Heart right ventricle (tissue), 16 donors: ENCODE measurements at regions of chr1 and their contacts with region 1.

Region 1: DNA sequence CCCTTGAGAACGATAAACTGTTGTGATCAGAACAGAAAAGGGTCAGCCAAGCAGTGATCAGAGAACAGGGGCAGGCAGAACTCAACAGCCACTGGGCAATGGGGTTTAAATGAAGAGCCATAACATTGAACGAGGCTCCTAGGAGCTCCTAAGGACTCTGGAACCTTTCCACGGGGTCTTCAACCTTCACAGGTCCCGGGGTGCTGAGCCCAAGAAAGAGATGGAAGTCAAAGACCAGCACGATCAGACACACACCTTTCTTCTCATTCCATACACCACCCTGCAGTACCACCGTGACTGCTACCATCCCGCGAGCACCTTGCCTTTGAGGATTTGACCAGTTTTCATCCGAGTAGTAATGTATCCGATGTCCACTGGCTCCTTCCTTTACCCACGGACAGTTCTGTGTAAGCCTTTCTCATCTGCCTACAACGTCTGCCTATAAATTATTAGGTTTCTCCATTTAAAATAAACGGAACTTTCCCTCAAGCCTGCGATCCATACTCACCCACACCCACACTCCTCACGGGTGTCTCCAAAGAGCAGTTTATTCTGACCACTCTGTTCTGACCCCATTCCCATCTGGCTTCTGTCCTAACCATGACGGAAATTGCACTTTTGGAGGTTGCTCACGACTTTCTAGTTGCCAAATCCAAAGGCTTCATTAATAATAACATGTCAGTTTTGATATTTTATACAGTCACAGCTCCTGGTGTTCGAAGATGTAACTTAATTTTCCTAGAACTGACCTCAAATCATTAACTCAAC is 16.8 kb upstream of the HHAT start:
- DNase-seq: peak in 1 of 2 donors; percentile 51
- ATAC-seq: peak; percentile 62 to 81 (median 72)
- H3K4me3 ChIP-seq: peak overlapping the region in 8 of 10 donors; percentile 13 to 49 (median 44)
- H3K27ac ChIP-seq: peak overlapping the region; percentile 19 to 88 (median 77)
- H3K4me1 ChIP-seq: peaks cover 0 to 24% (median 12%) of the 10 kb centered on the region in 9 donors
- H3K27me3 ChIP-seq: peaks cover 0 to 8% (median 0%) of the 10 kb centered on the region in 7 donors
- CTCF ChIP-seq: no peak

Region 2: DNA sequence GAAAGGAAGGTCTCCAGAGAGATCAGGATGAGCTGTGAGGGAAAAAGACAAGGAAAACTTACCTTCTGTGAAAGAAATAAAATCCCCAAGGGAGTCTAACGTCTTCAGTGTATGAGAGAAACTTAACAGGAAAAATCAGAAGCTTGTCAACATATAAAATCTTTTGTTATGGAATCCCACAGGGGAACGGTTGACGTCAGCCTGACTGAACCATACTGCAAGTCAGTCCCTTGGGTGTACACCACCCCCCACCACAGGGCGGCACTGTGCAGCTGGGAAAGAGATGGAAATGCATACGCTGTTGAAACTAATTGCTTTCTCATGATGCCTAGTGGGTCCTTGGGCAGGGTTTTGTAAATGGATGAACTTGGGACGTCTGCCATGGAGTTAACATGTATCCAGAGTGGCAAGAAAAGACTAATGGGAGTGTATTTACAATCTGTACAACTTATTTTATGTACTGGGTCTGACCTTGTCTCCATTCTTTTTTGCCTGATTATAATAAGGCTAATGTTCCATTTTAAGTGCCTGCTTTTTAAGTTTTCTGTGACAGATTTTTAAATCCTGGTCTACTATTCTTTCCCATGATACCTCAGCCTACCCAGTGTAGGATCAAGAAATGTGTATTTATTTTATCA is 461.4 kb before region 1 on chr1:
- intact Hi-C with region 1: loop called in 2 of 10 experiments (anchors 10 kb)
- DNase-seq: peak; percentile 28 to 34
- ATAC-seq: peak in 4 of 8 donors; percentile 20 to 46 (median 40)
- H3K4me3 ChIP-seq: no peak overlapping the region
- H3K27ac ChIP-seq: no peak overlapping the region
- H3K4me1 ChIP-seq: peaks cover 0 to 5% (median 0%) of the 10 kb centered on the region in 9 donors
- H3K27me3 ChIP-seq: no peaks in the 10 kb centered on the region
- CTCF ChIP-seq: peak in 7 of 9 donors; percentile 30 to 55 (median 35)

Region 3: GRCh38 chr1:209860293-209860881 is 451.5 kb before region 1 on chr1:
- intact Hi-C with region 1: loop called in 8 of 10 experiments (anchors 5 to 10 kb)
- DNase-seq: peak; percentile 58 to 60
- ATAC-seq: peak in 6 of 8 donors; percentile 59 to 81 (median 78)
- H3K4me3 ChIP-seq: no peak overlapping the region
- H3K27ac ChIP-seq: no peak overlapping the region
- H3K4me1 ChIP-seq: no peaks in the 10 kb centered on the region
- H3K27me3 ChIP-seq: peaks cover 0 to 33% (median 22%) of the 10 kb centered on the region in 7 donors
- CTCF ChIP-seq: peak; percentile 66 to 96 (median 87)

Region 4: DNA sequence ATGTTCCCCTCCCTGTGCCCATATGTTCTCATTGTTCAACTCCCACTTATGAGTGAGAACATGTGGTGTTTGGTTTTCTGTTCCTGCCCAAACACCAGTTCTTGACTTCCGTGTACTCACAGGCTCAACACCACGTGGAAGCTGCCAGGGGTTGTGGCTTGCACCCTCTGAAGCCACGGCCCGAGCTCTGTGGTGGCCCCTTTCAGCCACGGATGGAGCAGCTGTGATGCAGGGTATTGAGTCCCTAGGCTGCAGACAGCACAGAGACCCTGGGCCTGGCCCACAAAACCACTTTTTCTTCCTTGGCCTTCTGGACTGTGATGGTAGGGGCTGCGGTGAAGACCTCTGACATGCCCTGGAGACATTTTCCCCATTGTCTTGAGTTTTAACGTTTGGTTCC is 262.3 kb before region 1 on chr1:
- intact Hi-C with region 1: no loop called
- DNase-seq: no peak
- ATAC-seq: no peak
- H3K4me3 ChIP-seq: no peak overlapping the region
- H3K27ac ChIP-seq: no peak overlapping the region
- H3K4me1 ChIP-seq: no peaks in the 10 kb centered on the region
- H3K27me3 ChIP-seq: no peaks in the 10 kb centered on the region
- CTCF ChIP-seq: no peak

Region 5: GRCh38 chr1:210143465-210144062 is 168.3 kb before region 1 on chr1:
- intact Hi-C with region 1: loop called (anchors 1 to 5 kb)
- DNase-seq: peak; percentile 70 to 77
- ATAC-seq: peak in 2 of 8 donors; percentile 38
- H3K4me3 ChIP-seq: no peak overlapping the region
- H3K27ac ChIP-seq: no peak overlapping the region
- H3K4me1 ChIP-seq: no peaks in the 10 kb centered on the region
- H3K27me3 ChIP-seq: peaks cover 0 to 16% (median 0%) of the 10 kb centered on the region in 7 donors
- CTCF ChIP-seq: peak; percentile 45 to 82 (median 72)

Region 6: DNA sequence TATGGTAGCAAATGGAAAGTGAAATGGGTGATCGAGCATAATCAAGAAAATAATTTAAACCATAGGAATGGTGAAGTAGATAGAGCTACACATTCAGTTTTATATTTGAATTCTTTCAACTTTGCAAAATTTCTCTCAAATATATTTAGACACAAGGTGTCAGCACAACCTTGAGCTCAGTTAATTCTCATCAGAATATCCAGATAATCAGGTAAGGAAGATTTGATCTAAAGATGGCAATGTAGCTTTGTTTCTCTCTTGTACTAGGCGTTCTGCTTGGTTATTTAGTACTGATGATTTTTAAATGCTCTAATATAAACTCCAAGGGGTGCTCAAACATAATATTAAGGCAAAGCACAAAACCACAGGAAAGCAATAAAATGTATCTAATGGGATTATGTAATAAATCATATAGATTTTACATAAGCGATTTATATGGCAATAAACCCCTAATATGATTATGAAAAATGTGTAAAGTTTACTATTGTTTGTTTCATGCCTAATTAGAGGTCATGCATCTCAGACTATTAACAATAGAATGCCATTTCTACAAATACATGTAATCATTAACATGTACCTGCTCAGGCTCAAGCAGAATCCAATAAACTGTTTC is 111.7 kb before region 1 on chr1:
- intact Hi-C with region 1: loop called in 4 of 10 experiments (anchors 1 to 5 kb)
- DNase-seq: no peak
- ATAC-seq: no peak
- H3K4me3 ChIP-seq: no peak overlapping the region
- H3K27ac ChIP-seq: no peak overlapping the region
- H3K4me1 ChIP-seq: no peaks in the 10 kb centered on the region
- H3K27me3 ChIP-seq: peaks cover 0 to 8% (median 3%) of the 10 kb centered on the region in 7 donors
- CTCF ChIP-seq: peak in 6 of 9 donors; percentile 7 to 50 (median 32)

Region 7: GRCh38 chr1:210233216-210234020 is 78.5 kb before region 1 on chr1:
- intact Hi-C with region 1: loop called in 1 of 10 experiments (anchors 5 kb)
- DNase-seq: peak in 1 of 2 donors; percentile 52
- ATAC-seq: peak; percentile 25 to 63 (median 47)
- H3K4me3 ChIP-seq: peak overlapping the region; percentile 38 to 82 (median 66)
- H3K27ac ChIP-seq: peak overlapping the region; percentile 42 to 96 (median 88)
- H3K4me1 ChIP-seq: peaks cover 0 to 48% (median 36%) of the 10 kb centered on the region in 9 donors
- H3K27me3 ChIP-seq: peaks cover 0 to 86% (median 5%) of the 10 kb centered on the region in 7 donors
- CTCF ChIP-seq: no peak

Region 8: DNA sequence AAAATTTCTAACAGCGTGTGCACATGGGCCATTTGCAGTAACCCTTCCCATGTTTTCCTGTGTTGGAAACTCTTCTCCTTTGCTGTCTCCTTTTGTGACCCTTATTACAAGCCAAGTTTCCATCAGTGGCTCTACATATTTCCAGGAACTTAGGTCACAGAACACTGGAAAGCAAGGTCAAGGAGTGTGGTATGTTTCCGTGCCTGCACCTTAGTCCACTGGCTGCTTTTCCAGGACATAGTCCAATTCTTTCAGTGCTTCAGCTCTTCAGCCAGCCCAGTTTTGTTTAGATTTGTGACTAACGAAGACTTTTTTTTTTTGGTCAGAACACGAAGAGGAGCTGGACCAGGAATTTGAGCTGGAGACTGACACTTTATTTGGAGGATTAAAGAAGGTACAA is 50.6 kb after region 1 on chr1:
- intact Hi-C with region 1: no loop called
- DNase-seq: peak in 1 of 2 donors; percentile 41
- ATAC-seq: peak; percentile 57 to 93 (median 78)
- H3K4me3 ChIP-seq: no peak overlapping the region
- H3K27ac ChIP-seq: peak overlapping the region in 7 of 10 donors; percentile 13 to 61 (median 50)
- H3K4me1 ChIP-seq: peaks cover 0 to 26% (median 11%) of the 10 kb centered on the region in 9 donors
- H3K27me3 ChIP-seq: no peaks in the 10 kb centered on the region
- CTCF ChIP-seq: no peak